GM18951 (cell line): ENCODE measurements at regions of chr6 and their contacts with region 1.

Region 1: DNA sequence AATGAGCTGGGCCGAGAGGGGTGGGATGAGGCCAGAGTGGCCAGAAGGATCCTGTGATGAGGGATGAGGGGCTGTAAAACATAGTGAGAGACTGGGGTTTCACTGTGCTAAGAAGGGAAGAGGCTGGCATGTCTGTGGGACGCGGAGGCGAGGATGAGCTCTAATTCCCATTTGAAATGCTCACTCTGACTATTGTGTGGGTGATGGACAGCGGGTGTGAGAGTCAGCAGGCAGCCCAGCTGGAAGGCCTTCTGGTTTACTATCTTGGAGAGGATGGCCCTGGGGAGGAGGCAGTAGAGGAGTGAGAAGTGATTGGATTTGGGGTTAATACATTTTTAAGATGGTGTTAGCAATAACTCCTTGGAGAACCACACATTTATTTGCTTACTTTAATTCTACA is 9.5 kb upstream of the MICA start:
- POLR2A ChIP-seq: no peak

Region 2: DNA sequence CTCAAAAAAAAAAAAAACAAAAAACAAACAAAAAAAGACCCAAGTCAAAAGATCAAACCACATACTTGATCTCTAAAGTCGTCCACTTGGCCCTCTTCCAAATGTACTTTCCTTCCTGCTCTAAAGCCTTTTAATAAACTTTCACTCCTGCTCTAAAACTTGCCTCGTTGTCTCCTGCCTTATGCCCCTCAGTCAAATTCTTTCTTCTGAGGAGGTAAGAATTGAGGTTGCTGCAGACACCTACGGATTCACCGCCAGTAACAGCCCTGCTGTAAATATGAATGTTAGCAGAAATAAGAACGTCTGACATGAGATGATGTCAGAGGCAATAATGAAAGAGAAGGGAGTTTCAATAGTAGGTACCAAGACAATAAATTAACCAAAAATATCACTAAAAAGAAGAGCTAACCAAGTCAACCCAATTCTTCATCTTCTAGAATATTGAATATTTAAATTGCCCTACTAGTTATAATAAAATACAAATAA is 296.3 kb before region 1 on chr6:
- in situ Hi-C with region 1: no loop called
- POLR2A ChIP-seq: no peak

Region 3: DNA sequence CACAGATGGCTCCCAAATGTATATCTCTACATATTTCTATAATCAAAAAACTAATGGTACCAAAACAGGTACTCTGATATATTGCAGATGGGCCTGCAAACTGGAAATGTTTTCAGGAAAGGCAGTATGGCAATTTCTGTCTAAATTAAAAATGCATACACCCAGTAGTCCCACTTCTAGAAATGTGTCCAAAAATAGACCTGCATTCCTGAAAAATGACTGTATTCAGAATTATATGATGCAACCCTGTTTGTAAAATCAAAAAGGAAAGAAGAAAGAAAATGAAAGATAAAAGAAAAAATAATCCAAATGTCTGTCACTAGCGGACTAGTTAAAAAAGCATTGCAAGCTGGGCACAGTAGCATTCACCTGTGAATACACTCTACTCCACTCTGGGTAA is 91.1 kb after region 1 on chr6:
- in situ Hi-C with region 1: loop called (anchors 5 kb)
- POLR2A ChIP-seq: no peak

Region 4: DNA sequence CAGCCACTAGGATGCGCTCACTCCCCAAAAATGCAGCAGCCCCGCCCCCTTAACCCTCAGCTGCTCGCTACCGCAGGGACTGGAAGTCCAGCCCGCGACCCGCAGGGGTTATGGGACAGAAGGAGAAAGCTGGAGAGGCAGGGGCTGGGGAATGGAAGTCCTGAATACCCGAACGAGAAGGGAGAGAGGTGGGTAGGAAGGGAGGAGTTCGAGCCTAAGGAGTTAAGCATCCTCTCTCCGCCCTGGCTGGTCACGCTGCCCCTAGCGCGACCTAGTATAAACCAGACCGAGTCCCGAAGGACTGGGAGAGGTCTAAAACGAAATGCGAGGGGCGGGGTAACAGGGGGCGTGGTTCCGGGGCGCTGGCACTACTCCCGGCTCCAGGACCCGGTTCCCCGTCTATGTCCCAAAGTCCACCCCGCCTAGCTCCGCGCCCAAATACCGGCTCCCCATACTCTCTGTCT is 335.6 kb after region 1 on chr6:
- in situ Hi-C with region 1: no loop called
- POLR2A ChIP-seq: no peak